Activated B cell treated with CpG ODN at 0.5 μM for 24 hours (primary cell): ENCODE measurements at regions of chr6 and their contacts with region 1.

Region 1: DNA sequence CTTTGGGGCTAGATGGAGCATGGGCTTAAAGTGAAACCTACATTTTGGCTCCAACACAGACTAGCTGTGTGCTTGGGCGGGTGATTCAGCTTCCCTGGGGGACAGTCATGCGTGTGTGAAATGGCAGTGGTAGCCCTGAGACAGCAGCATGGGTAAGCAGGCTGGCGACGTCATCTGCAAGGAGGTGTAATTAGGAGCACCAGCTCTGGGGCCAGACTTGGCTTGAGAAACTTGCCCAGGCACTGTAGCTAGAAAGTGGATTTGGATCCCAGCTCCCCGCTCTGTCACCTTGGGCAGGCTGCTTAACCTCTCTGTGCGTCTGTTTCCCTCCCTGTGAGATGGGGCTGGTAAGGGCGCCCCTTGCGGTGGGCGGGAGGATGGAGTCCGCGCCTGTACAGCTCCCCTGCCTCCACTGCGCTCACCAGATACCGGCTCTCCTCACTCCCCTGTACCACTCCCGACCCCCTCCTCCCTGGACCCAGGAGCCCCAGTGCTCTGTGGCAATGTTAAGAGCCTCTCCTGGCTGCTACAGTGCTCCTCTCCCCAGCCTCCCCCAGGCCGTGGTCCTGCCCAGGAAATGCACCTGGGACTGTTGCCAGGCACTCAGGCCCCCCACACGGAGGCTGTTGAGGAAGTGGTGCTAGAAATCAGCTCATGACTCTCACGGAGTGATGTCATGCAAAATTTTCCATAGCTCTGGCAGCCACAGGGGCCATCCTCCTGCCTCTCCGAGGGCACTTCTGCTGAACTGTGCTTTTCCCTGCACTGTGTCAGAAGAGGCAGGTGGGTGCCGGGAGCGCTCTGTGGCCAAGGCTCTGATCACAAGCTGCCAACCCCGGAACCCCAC is 44.6 kb downstream of the SYNJ2 start:
- DNase-seq: peak; percentile 77
- ATAC-seq: peak; percentile 71
- H3K4me3 Mint-ChIP-seq: peak overlapping the region; percentile 85
- H3K27ac Mint-ChIP-seq: peak overlapping the region; percentile 98
- H3K4me1 Mint-ChIP-seq: peaks cover 39% of the 10 kb centered on the region
- H3K27me3 Mint-ChIP-seq: no peaks in the 10 kb centered on the region
- CTCF ChIP-seq: peak; percentile 63

Region 2: DNA sequence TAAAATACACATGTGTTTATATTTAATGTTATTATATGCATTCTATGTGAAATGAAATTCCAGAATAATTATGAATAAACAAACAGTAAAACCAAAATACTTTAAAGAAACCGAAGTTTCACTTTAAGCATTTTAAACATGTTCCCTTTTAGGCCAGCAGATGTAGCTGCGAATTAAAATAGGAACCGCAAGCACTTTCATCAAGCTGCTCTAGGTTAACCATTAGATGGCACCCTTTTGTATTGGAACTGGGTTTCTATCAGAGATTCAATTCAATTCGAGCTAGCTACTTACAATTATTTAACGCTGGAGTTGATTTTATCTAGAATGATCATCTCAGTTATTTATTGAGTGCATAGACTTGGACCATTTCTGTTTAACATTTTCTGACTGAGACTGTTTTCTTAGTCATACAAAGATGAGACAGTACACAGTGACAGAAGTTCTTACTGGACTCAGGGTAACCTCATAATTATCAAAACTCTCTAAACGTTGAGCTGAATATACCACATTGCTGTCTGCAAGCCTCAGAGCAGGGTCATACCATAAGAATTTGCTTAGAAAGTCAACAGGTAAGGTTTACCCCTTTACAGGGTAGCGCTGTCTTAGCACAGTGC is 711.5 kb before region 1 on chr6:
- CTCF ChIA-PET with region 1: no interaction called
- POLR2A ChIA-PET with region 1: no interaction called
- intact Hi-C with region 1: no loop called
- DNase-seq: no peak
- ATAC-seq: peak; percentile 94
- H3K4me3 Mint-ChIP-seq: no peak overlapping the region
- H3K27ac Mint-ChIP-seq: peak overlapping the region; percentile 8
- H3K4me1 Mint-ChIP-seq: peaks cover 4% of the 10 kb centered on the region
- H3K27me3 Mint-ChIP-seq: no peaks in the 10 kb centered on the region
- CTCF ChIP-seq: peak; percentile 93

Region 3: DNA sequence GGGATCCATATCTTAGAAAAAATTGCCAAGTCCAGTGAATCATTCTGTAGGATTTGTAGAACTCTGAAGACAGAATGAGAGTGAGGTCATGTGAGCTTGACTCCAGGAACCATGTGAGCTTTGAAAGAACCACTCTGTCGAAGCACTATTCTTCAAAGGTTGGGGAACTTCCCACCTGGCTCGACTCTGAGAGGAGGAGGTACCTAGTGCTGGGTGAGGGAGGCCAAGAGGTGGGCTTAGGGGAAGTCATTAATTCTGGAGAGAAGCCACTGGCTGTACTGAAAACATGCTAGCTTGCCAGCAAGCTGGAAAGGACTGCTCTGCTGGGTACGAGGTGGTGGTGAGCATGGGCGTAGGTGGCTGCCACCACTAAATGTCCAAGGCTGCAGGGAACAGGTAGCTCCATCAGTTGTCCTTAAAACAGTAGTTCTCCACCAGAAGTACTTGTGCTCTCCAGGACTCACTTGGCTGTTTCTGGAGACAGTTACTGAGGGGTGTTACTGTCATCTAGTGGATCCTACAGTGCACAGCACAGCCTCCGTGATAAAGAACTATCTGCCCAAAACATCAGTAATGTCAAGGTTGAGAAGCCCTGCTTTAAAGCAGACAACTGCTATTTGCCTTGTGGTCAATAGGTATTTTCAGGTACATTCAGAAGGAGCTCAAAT is 79.3 kb before region 1 on chr6:
- CTCF ChIA-PET with region 1: no interaction called
- POLR2A ChIA-PET with region 1: no interaction called
- intact Hi-C with region 1: loop called (anchors 5 kb)
- DNase-seq: no peak
- ATAC-seq: peak; percentile 42
- H3K4me3 Mint-ChIP-seq: no peak overlapping the region
- H3K27ac Mint-ChIP-seq: no peak overlapping the region
- H3K4me1 Mint-ChIP-seq: peaks cover 7% of the 10 kb centered on the region
- H3K27me3 Mint-ChIP-seq: no peaks in the 10 kb centered on the region
- CTCF ChIP-seq: no peak

Region 4: GRCh38 chr6:157989541-157990289 is 36.6 kb before region 1 on chr6:
- CTCF ChIA-PET with region 1: interaction called, 28 read pairs
- POLR2A ChIA-PET with region 1: interaction called, 32 read pairs
- intact Hi-C with region 1: loop called (anchors 2 kb)
- DNase-seq: no peak
- ATAC-seq: no peak
- H3K4me3 Mint-ChIP-seq: peak overlapping the region; percentile 81
- H3K27ac Mint-ChIP-seq: peak overlapping the region; percentile 82
- H3K4me1 Mint-ChIP-seq: peaks cover 40% of the 10 kb centered on the region
- H3K27me3 Mint-ChIP-seq: no peaks in the 10 kb centered on the region
- CTCF ChIP-seq: no peak

Region 5: DNA sequence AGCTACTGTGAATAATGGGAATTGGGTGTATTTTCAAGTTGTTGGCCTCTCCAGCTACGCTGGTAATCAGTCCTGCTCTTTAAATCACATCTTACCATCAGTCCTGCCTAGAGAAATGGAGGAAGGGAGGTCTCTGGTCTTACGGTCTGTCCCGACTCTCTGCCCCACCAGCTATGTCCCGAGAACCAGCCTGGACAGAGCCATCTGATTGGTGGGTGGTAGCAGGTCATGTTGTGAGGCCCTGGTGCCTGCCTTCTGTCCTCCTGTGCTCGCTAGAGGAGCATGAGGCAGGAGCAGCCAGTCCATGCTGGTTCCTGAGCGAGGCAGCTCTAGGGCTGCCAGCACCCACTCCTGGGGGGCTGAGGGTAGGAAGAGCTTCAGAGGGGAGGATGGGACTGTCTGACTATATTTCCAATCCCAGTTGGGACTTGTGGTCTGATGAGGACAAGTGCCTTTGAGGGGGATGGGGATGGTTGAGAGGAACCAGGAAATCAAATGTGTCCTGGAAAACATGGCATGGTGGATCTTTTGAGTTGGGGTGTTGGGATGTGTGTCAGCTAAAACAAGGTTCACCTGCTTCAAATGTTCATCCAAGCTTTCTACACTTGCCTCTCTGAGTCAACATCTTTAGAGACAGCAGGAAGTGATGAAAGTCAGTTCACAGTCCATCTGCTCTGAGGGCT is 11.6 kb before region 1 on chr6:
- CTCF ChIA-PET with region 1: interaction called, 9 read pairs
- POLR2A ChIA-PET with region 1: interaction called, 12 read pairs
- intact Hi-C with region 1: loop called (anchors 2 kb)
- DNase-seq: no peak
- ATAC-seq: peak; percentile 47
- H3K4me3 Mint-ChIP-seq: peak overlapping the region; percentile 20
- H3K27ac Mint-ChIP-seq: peak overlapping the region; percentile 57
- H3K4me1 Mint-ChIP-seq: peaks cover 53% of the 10 kb centered on the region
- H3K27me3 Mint-ChIP-seq: no peaks in the 10 kb centered on the region
- CTCF ChIP-seq: no peak

Region 6: GRCh38 chr6:158168040-158168289 is 141.7 kb after region 1 on chr6 and contains the start of gene SERAC1:
- CTCF ChIA-PET with region 1: no interaction called
- POLR2A ChIA-PET with region 1: no interaction called
- intact Hi-C with region 1: loop called (anchors 1 kb)
- DNase-seq: no peak
- ATAC-seq: peak; percentile 53
- H3K4me3 Mint-ChIP-seq: peak within 1 kb of the TSS; percentile 95
- H3K27ac Mint-ChIP-seq: peak within 1 kb of the TSS; percentile 99
- H3K4me1 Mint-ChIP-seq: peaks cover 14% of the 10 kb centered on the region
- H3K27me3 Mint-ChIP-seq: no peaks in the 10 kb centered on the region
- CTCF ChIP-seq: no peak
- total RNA-seq, gene SERAC1: 3.0 TPM in 2 replicates